H1 (cell line): ENCODE measurements at regions of chr19 and their contacts with region 1.

Region 1: DNA sequence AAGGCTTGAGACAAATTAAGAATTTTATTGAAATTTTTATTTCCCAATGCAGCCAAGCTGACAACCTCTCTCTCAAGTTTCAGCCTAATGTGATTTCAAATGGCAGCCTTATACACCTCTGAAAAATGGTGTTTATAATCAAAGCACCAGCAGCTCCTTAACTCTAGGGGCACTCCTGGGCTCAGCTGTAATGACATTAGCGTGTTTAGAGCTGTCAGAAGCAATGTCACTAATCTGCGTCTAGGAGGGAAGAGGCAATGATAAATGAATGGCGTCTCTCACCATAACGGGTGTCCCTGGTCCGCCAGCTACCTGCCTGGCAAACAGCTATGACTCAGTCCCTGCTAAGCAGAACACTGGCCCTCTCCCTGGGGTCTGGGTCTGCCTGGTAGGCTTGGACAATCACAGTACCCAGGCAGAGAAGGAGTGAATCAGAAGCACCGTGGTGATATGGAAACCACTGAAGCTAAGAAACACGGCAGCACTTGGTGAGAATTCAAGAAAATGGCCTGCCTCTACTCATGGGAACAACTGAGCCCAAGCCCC is 131.8 kb upstream of the VSTM2B start:
- DNase-seq: no peak
- H3K4me3 ChIP-seq: no peak overlapping the region
- H3K27ac ChIP-seq: no peak overlapping the region
- H3K4me1 ChIP-seq: peaks cover 0 to 10% (median 4%) of the 10 kb centered on the region in 4 experiments; a peak in 5 of 7 replicates
- H3K27me3 ChIP-seq: no peaks in the 10 kb centered on the region; a peak in 1 of 7 replicates
- CTCF ChIP-seq: peak in 1 of 3 experiments; percentile 51; a peak in 1 of 4 replicates
- EP300 ChIP-seq: no peak
- POLR2A ChIP-seq: no peak
- RAD21 ChIP-seq: peak in 1 of 2 experiments; percentile 36; a peak in 2 of 4 replicates

Region 2: GRCh38 chr19:29381353-29382203 is 12.4 kb before region 1 on chr19:
- CTCF ChIA-PET with region 1: interaction called, 28 read pairs
- POLR2A ChIA-PET with region 1: interaction called, 3 read pairs
- DNase-seq: peak in 1 of 2 experiments; percentile 31
- H3K4me3 ChIP-seq: no peak overlapping the region
- H3K27ac ChIP-seq: no peak overlapping the region
- H3K4me1 ChIP-seq: peaks cover 0 to 4% (median 2%) of the 10 kb centered on the region in 4 experiments; a peak in 3 of 7 replicates
- H3K27me3 ChIP-seq: no peaks in the 10 kb centered on the region
- CTCF ChIP-seq: no peak
- EP300 ChIP-seq: no peak
- POLR2A ChIP-seq: no peak
- RAD21 ChIP-seq: no peak

Region 3: GRCh38 chr19:29439688-29440550 is 45.9 kb after region 1 on chr19:
- CTCF ChIA-PET with region 1: no interaction called
- POLR2A ChIA-PET with region 1: no interaction called
- DNase-seq: no peak
- H3K4me3 ChIP-seq: no peak overlapping the region
- H3K27ac ChIP-seq: no peak overlapping the region
- H3K4me1 ChIP-seq: no peaks in the 10 kb centered on the region
- H3K27me3 ChIP-seq: no peaks in the 10 kb centered on the region
- CTCF ChIP-seq: no peak
- EP300 ChIP-seq: no peak
- POLR2A ChIP-seq: no peak
- RAD21 ChIP-seq: no peak

Region 4: GRCh38 chr19:29454109-29454508 is 60.1 kb after region 1 on chr19:
- CTCF ChIA-PET with region 1: no interaction called
- POLR2A ChIA-PET with region 1: no interaction called
- DNase-seq: peak in 1 of 2 experiments; percentile 10
- H3K4me3 ChIP-seq: no peak overlapping the region
- H3K27ac ChIP-seq: no peak overlapping the region
- H3K4me1 ChIP-seq: no peaks in the 10 kb centered on the region
- H3K27me3 ChIP-seq: 0 out of 7 replicates have a peak, but pooled peaks cover 0 to 2% (median 0%) of the 10 kb centered on the region in 4 experiments
- CTCF ChIP-seq: no peak
- EP300 ChIP-seq: no peak
- POLR2A ChIP-seq: no peak
- RAD21 ChIP-seq: no peak

Region 5: GRCh38 chr19:29546583-29547190 is 152.7 kb after region 1 on chr19:
- CTCF ChIA-PET with region 1: no interaction called
- POLR2A ChIA-PET with region 1: no interaction called
- DNase-seq: no peak
- H3K4me3 ChIP-seq: no peak overlapping the region
- H3K27ac ChIP-seq: no peak overlapping the region
- H3K4me1 ChIP-seq: no peaks in the 10 kb centered on the region
- H3K27me3 ChIP-seq: no peaks in the 10 kb centered on the region
- CTCF ChIP-seq: no peak
- EP300 ChIP-seq: no peak
- POLR2A ChIP-seq: no peak
- RAD21 ChIP-seq: no peak